Activated T-helper 1 cell treated with anti-CD3 and anti-CD28 coated beads, Interleukin-12 subunit alpha, Interleukin-12 subunit beta, Interleukin-2, Interleukin-4 antibody, amounts not matched to agents 30 ng/mL and 10 ng/mL and 1 ng/mL, durations not matched to agents 14 hours and 24 hours and 36 hours (primary cell): ENCODE measurements at regions of chr2 and their contacts with region 1.

Region 1: GRCh38 chr2:61854474-61855182 is 768 bp upstream of the FAM161A start:
- DNase-seq: peak; percentile 87
- H3K4me3 Mint-ChIP-seq: peak overlapping the region; percentile 98
- H3K27ac Mint-ChIP-seq: peak overlapping the region; percentile 88
- H3K4me1 Mint-ChIP-seq: peaks cover 23% of the 10 kb centered on the region
- H3K27me3 Mint-ChIP-seq: no peaks in the 10 kb centered on the region

Region 2: DNA sequence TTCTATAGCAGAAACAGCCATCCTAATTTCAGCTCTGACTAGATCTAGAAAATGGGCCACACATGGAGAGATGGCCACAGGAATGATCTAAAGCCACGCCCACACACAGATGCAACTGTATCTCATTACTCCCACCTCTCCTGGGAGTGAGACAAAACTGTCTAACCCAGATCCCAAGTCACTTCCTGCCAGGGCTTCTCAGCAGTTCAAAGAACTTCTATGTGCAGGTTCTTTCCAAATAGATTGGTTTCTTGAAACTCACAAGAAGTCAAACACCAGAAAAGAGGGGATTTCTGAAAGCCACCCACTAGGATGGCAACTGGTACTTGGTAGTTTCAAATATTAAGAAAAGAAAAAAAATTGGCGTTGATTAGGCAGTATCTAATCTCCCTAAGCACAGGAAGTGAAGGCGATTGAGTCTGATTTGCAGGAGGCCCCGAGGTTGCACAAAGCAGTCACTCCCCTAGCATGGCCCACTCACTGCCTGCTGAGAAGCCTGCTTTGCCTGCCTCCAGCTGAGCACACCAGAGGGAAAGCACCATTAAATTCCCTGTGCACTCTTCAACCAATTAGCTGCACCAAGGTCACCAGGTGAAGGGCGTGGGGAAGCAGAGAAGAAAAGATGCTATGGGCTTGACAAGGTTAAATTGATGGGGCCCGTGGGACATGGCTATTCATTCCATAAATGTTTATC is 1047.5 kb before region 1 on chr2:
- intact Hi-C with region 1: loop called (anchors 10 kb)
- DNase-seq: no peak
- H3K4me3 Mint-ChIP-seq: peak overlapping the region; percentile 32
- H3K27ac Mint-ChIP-seq: peak overlapping the region; percentile 83
- H3K4me1 Mint-ChIP-seq: peaks cover 46% of the 10 kb centered on the region
- H3K27me3 Mint-ChIP-seq: no peaks in the 10 kb centered on the region

Region 3: GRCh38 chr2:61176755-61177726 is 677.6 kb before region 1 on chr2:
- intact Hi-C with region 1: loop called (anchors 1 kb)
- DNase-seq: peak; percentile 92
- H3K4me3 Mint-ChIP-seq: peak overlapping the region; percentile 90
- H3K27ac Mint-ChIP-seq: peak overlapping the region; percentile 87
- H3K4me1 Mint-ChIP-seq: peaks cover 48% of the 10 kb centered on the region
- H3K27me3 Mint-ChIP-seq: peaks cover 10% of the 10 kb centered on the region

Region 4: DNA sequence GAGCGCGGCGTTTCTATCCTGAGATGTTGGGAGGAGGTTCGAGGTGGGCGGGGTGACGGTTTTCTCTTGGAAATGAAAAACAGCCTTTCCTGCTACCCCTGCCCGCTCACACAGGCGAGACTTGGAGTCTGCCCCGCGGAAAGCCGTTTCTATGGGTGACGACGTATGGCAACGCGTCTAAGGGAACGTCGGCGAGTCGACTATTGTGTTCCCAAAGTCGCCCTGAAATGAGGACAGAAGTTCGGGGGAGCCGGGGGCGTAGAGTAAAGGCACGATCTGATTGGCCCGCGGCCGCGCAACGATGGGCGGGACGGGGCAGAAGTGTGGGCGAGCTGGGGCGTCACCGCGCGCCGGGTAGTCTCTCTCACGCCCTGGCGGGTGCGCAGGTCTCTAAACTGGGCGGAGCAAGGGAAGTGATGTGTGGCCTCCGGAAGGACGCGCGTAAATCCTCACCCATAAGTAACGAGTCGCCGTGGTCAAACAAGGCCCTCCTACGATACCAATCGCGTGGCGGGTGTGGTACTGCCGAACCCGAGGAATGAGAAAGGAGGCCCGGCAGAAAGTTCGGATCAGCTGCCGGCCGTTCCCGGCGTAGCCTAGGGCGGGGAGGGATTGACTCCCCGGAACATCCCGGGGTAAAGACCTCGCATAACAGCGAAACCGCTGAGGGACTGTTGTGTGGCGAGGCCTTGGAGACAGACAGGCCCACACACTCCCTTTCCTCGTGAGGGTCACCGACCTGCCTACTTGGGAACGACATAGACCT is 90.4 kb before region 1 on chr2:
- intact Hi-C with region 1: loop called (anchors 1 kb)
- DNase-seq: peak; percentile 96
- H3K4me3 Mint-ChIP-seq: peak overlapping the region; percentile 91
- H3K27ac Mint-ChIP-seq: peak overlapping the region; percentile 97
- H3K4me1 Mint-ChIP-seq: peaks cover 24% of the 10 kb centered on the region
- H3K27me3 Mint-ChIP-seq: no peaks in the 10 kb centered on the region

Region 5: DNA sequence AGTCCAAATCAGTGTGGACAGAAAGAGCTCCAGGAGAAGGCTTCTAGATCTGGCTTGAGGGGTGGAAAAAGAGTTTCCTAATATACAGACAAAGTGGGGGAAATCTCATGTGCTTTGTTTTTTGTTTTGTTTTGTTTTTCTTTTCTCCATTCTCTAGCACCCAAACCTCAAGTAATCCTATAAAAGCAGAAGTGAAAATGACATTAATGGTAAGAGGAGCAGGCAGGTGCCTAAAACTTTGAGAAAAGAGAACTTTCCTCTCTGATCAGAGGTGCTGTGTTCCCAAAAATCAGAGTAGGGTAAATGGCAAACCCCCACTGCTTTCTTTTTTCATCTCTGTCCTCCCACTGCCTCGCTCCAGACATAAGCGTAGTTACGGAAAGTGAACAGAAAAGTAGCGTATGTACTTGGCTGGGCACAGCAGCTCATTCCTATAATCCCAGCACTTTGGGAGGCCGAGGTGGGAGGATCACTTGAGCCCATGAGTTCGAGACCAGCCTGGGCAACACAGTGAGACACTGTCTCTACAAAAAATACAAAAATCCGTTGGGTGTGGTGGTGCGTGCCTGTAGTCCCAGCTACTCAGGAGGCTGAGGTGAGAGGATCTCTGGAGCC is 78.6 kb before region 1 on chr2:
- intact Hi-C with region 1: no loop called
- DNase-seq: no peak
- H3K4me3 Mint-ChIP-seq: no peak overlapping the region
- H3K27ac Mint-ChIP-seq: no peak overlapping the region
- H3K4me1 Mint-ChIP-seq: no peaks in the 10 kb centered on the region
- H3K27me3 Mint-ChIP-seq: peaks cover 34% of the 10 kb centered on the region

Region 6: GRCh38 chr2:61905372-61906185 is 51.0 kb after region 1 on chr2 and contains the start of gene COMMD1:
- intact Hi-C with region 1: loop called (anchors 1 kb)
- DNase-seq: peak; percentile 78
- H3K4me3 Mint-ChIP-seq: peak within 1 kb of the TSS; percentile 97
- H3K27ac Mint-ChIP-seq: peak within 1 kb of the TSS; percentile 81
- H3K4me1 Mint-ChIP-seq: peaks cover 18% of the 10 kb centered on the region
- H3K27me3 Mint-ChIP-seq: no peaks in the 10 kb centered on the region
- total RNA-seq, gene COMMD1: 25.4 and 28.9 TPM in 2 replicates

Region 7: GRCh38 chr2:61943251-61943650 is 88.6 kb after region 1 on chr2:
- intact Hi-C with region 1: no loop called
- DNase-seq: no peak
- H3K4me3 Mint-ChIP-seq: no peak overlapping the region
- H3K27ac Mint-ChIP-seq: no peak overlapping the region
- H3K4me1 Mint-ChIP-seq: peaks cover 7% of the 10 kb centered on the region
- H3K27me3 Mint-ChIP-seq: no peaks in the 10 kb centered on the region